Heart left ventricle (tissue), 16 donors: ENCODE measurements at regions of chr3 and their contacts with region 1.

Region 1: GRCh38 chr3:11392014-11392859 is 120.0 kb downstream of the ATG7 start:
- DNase-seq: no peak
- ATAC-seq: peak in 2 of 4 donors; percentile 37 to 52
- H3K4me3 ChIP-seq: no peak overlapping the region
- H3K27ac ChIP-seq: peak overlapping the region in 1 of 12 donors; percentile 12
- H3K4me1 ChIP-seq: peaks cover 0 to 32% (median 24%) of the 10 kb centered on the region in 12 donors
- H3K27me3 ChIP-seq: no peaks in the 10 kb centered on the region
- CTCF ChIP-seq: no peak
- POLR2A ChIP-seq: no peak

Region 2: DNA sequence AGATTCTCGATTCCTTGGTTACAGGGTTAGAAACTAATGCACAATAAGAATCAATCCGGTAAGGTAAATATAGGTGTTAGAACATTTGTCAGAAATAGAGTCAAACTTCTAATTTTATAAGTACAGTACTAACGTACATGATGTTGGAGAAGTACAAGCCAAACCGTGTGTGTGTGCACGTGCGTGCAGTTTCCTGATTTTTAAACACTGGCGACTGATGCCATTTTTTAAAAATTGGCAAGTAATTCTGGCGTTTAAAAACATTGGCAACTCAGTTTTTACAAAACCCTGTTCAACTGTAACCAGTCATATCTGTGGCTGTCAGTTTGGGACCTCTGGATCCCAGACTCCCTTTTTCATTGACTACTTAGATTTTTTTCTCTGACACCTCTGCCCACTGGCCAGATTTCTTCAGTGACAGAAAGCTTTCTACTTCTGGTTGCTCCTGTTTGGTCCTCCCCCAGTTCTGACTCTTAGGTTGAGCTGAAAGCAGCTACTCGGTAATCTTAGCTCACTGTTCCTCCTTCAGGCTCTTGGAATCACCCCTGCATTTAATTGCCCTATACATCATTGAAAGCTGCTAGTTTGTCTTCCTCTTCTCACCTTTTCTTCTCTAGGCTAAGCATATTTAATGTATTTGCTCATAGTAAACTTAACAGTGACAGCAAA is 119.2 kb before region 1 on chr3:
- intact Hi-C with region 1: no loop called
- DNase-seq: no peak
- ATAC-seq: no peak
- H3K4me3 ChIP-seq: peak overlapping the region; percentile 68 to 96 (median 84)
- H3K27ac ChIP-seq: peak overlapping the region in 10 of 12 donors; percentile 50 to 95 (median 82)
- H3K4me1 ChIP-seq: peaks cover 0 to 49% (median 13%) of the 10 kb centered on the region in 12 donors
- H3K27me3 ChIP-seq: no peaks in the 10 kb centered on the region
- CTCF ChIP-seq: no peak
- POLR2A ChIP-seq: no peak

Region 3: GRCh38 chr3:11445883-11446282 is 53.6 kb after region 1 on chr3:
- intact Hi-C with region 1: loop called in 1 of 10 experiments (anchors 10 kb)
- DNase-seq: peak in 2 of 5 donors; percentile 22 to 37
- ATAC-seq: peak; percentile 43 to 87 (median 60)
- H3K4me3 ChIP-seq: no peak overlapping the region
- H3K27ac ChIP-seq: no peak overlapping the region
- H3K4me1 ChIP-seq: peaks cover 0 to 12% (median 0%) of the 10 kb centered on the region in 12 donors
- H3K27me3 ChIP-seq: no peaks in the 10 kb centered on the region
- CTCF ChIP-seq: no peak
- POLR2A ChIP-seq: no peak

Region 4: GRCh38 chr3:11530153-11530721 is 138.0 kb after region 1 on chr3:
- intact Hi-C with region 1: loop called in 1 of 10 experiments (anchors 10 kb)
- DNase-seq: peak in 4 of 5 donors; percentile 47 to 82 (median 76)
- ATAC-seq: peak; percentile 78 to 89 (median 84)
- H3K4me3 ChIP-seq: no peak overlapping the region
- H3K27ac ChIP-seq: peak overlapping the region in 4 of 12 donors; percentile 7 to 37 (median 14)
- H3K4me1 ChIP-seq: peaks cover 0 to 34% (median 11%) of the 10 kb centered on the region in 12 donors
- H3K27me3 ChIP-seq: no peaks in the 10 kb centered on the region
- CTCF ChIP-seq: peak in 4 of 12 donors; percentile 8 to 26 (median 17)
- POLR2A ChIP-seq: no peak